Ascending aorta (tissue), 2 donors: ENCODE measurements at regions of chr9 and their contacts with region 1.

Region 1: GRCh38 chr9:95025213-95026147 is 292.0 kb downstream of the FANCC start:
- DNase-seq: peak in 1 of 2 donors; percentile 93
- H3K4me3 ChIP-seq: peak overlapping the region; percentile 27 to 45
- H3K27ac ChIP-seq: peak overlapping the region; percentile 81 to 99
- H3K4me1 ChIP-seq: peaks cover 26 to 89% of the 10 kb centered on the region in 2 donors
- H3K27me3 ChIP-seq: no peaks in the 10 kb centered on the region
- CTCF ChIP-seq: peak; percentile 45 to 52 (median 46)

Region 2: DNA sequence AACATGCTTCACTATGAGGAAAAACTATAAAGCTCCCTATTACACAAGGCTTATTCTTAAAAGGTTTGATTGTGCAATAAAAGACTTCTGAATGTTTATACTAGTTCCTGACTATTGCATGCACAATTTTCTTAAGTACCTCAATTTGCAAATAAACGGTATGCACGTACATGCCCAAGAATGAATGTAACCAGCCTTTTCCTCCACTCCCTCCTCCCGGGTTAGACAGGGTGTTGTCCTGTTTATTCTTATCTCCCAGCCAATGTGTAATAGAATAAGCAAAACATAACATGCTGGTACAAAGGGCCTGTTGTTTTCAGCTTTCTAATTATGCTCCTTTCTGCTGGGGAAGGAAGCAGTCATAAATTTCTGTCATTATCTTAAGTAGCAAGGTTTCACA is 219.9 kb before region 1 on chr9:
- intact Hi-C with region 1: loop called (anchors 5 kb)
- DNase-seq: peak in 1 of 2 donors; percentile 71
- H3K4me3 ChIP-seq: no peak overlapping the region
- H3K27ac ChIP-seq: peak overlapping the region; percentile 94 to 96
- H3K4me1 ChIP-seq: peaks cover 35 to 82% of the 10 kb centered on the region in 2 donors
- H3K27me3 ChIP-seq: no peaks in the 10 kb centered on the region
- CTCF ChIP-seq: no peak

Region 3: GRCh38 chr9:95048225-95049087 is 23.0 kb after region 1 on chr9:
- intact Hi-C with region 1: loop called (anchors 2 kb)
- DNase-seq: peak in 1 of 2 donors; percentile 74
- H3K4me3 ChIP-seq: peak overlapping the region; percentile 54 to 67
- H3K27ac ChIP-seq: peak overlapping the region; percentile 84 to 95
- H3K4me1 ChIP-seq: peaks cover 16 to 46% of the 10 kb centered on the region in 2 donors
- H3K27me3 ChIP-seq: no peaks in the 10 kb centered on the region
- CTCF ChIP-seq: no peak

Region 4: GRCh38 chr9:95078958-95079357 is 53.5 kb after region 1 on chr9:
- intact Hi-C with region 1: loop called (anchors 5 kb)
- DNase-seq: peak in 1 of 2 donors; percentile 76
- H3K4me3 ChIP-seq: peak overlapping the region; percentile 25 to 47
- H3K27ac ChIP-seq: peak overlapping the region; percentile 84 to 95
- H3K4me1 ChIP-seq: peaks cover 37 to 85% of the 10 kb centered on the region in 2 donors
- H3K27me3 ChIP-seq: no peaks in the 10 kb centered on the region
- CTCF ChIP-seq: no peak

Region 5: GRCh38 chr9:95091607-95092261 is 66.3 kb after region 1 on chr9:
- intact Hi-C with region 1: no loop called
- DNase-seq: no peak
- H3K4me3 ChIP-seq: peak overlapping the region in 1 of 2 donors; percentile 18
- H3K27ac ChIP-seq: peak overlapping the region; percentile 94 to 95
- H3K4me1 ChIP-seq: peaks cover 45 to 72% of the 10 kb centered on the region in 2 donors
- H3K27me3 ChIP-seq: no peaks in the 10 kb centered on the region
- CTCF ChIP-seq: no peak

Region 6: GRCh38 chr9:95138474-95138873 is 113.0 kb after region 1 on chr9:
- intact Hi-C with region 1: no loop called
- DNase-seq: no peak
- H3K4me3 ChIP-seq: no peak overlapping the region
- H3K27ac ChIP-seq: no peak overlapping the region
- H3K4me1 ChIP-seq: no peaks in the 10 kb centered on the region
- H3K27me3 ChIP-seq: no peaks in the 10 kb centered on the region
- CTCF ChIP-seq: no peak